Activated naive CD8-positive, alpha-beta T cell treated with anti-CD3 and anti-CD28 coated beads, Interleukin-2, amount 10 ng/mL, durations not matched to agents 7 days and 5 days (primary cell): ENCODE measurements at regions of chr2 and their contacts with region 1.

Region 1: GRCh38 chr2:191013932-191014652 is at the start of gene STAT1:
- DNase-seq: peak; percentile 100
- ATAC-seq: peak; percentile 87
- H3K4me3 Mint-ChIP-seq: no peak within 1 kb of the TSS
- H3K27ac Mint-ChIP-seq: no peak within 1 kb of the TSS
- H3K4me1 Mint-ChIP-seq: peaks cover 35% of the 10 kb centered on the region
- H3K27me3 Mint-ChIP-seq: no peaks in the 10 kb centered on the region
- total RNA-seq, gene STAT1: 544 to 571 TPM

Region 2: GRCh38 chr2:190880378-190881073 is 133.6 kb before region 1 on chr2 and contains the start of gene GLS:
- POLR2A ChIA-PET with region 1: interaction called, 37 read pairs
- DNase-seq: peak; percentile 94
- ATAC-seq: peak; percentile 80
- H3K4me3 Mint-ChIP-seq: peak within 1 kb of the TSS; percentile 100
- H3K27ac Mint-ChIP-seq: peak within 1 kb of the TSS; percentile 100
- H3K4me1 Mint-ChIP-seq: peaks cover 39% of the 10 kb centered on the region
- H3K27me3 Mint-ChIP-seq: no peaks in the 10 kb centered on the region
- total RNA-seq, gene GLS: 175 to 187 TPM

Region 3: GRCh38 chr2:190911813-190912212 is 102.3 kb before region 1 on chr2:
- POLR2A ChIA-PET with region 1: no interaction called
- DNase-seq: no peak
- ATAC-seq: peak; percentile 16
- H3K4me3 Mint-ChIP-seq: no peak overlapping the region
- H3K27ac Mint-ChIP-seq: no peak overlapping the region
- H3K4me1 Mint-ChIP-seq: peaks cover 23% of the 10 kb centered on the region
- H3K27me3 Mint-ChIP-seq: no peaks in the 10 kb centered on the region

Region 4: DNA sequence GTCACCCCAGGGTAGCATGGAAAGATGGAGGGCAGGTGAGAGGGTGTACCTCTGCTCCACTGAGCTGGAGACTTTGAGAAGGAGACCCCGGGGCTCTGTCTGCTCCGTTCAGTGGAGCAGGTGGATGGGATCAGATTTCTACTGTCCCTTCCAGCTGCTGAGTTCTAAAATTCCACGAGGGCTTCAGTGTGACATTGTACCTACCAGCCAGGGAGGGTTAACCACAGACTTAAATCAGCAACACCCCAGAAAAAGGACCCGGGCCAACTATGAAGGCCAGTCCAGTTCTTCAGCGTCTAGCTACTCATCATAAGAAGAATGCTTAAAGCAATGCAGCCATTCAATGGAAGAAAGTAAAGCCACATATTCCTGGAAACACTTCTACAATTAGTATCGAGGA is 24.0 kb before region 1 on chr2:
- POLR2A ChIA-PET with region 1: interaction called, 12 read pairs
- DNase-seq: no peak
- ATAC-seq: no peak
- H3K4me3 Mint-ChIP-seq: no peak overlapping the region
- H3K27ac Mint-ChIP-seq: peak overlapping the region; percentile 58
- H3K4me1 Mint-ChIP-seq: peaks cover 56% of the 10 kb centered on the region
- H3K27me3 Mint-ChIP-seq: no peaks in the 10 kb centered on the region

Region 5: DNA sequence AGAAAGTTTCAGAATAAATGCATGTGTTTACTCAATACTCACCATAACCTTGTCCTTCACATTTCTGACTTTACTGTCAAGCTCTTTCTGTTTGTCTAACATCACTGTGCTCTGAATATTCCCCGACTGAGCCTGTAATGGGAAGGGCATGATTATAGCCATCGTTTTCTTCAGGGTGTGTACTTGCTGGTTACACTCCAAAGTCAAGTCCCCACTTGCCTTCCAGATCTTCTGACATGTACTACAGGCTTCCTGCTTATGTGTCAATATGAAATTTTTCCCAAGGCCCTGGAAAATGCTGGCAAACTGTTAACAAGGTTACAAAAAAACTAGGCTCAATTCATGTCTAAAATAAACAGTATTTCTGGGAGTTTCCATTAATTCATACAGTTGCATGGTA is 13.1 kb before region 1 on chr2:
- POLR2A ChIA-PET with region 1: interaction called, 49 read pairs
- DNase-seq: no peak
- ATAC-seq: no peak
- H3K4me3 Mint-ChIP-seq: peak overlapping the region; percentile 4
- H3K27ac Mint-ChIP-seq: peak overlapping the region; percentile 68
- H3K4me1 Mint-ChIP-seq: peaks cover 72% of the 10 kb centered on the region
- H3K27me3 Mint-ChIP-seq: no peaks in the 10 kb centered on the region

Region 6: GRCh38 chr2:191029280-191029950 is 15.3 kb after region 1 on chr2:
- POLR2A ChIA-PET with region 1: interaction called, 125 read pairs
- DNase-seq: no peak
- ATAC-seq: no peak
- H3K4me3 Mint-ChIP-seq: peak overlapping the region; percentile 11
- H3K27ac Mint-ChIP-seq: peak overlapping the region; percentile 72
- H3K4me1 Mint-ChIP-seq: peaks cover 52% of the 10 kb centered on the region
- H3K27me3 Mint-ChIP-seq: no peaks in the 10 kb centered on the region

Region 7: GRCh38 chr2:191045141-191045540 is 31.0 kb after region 1 on chr2:
- POLR2A ChIA-PET with region 1: no interaction called
- DNase-seq: no peak
- ATAC-seq: no peak
- H3K4me3 Mint-ChIP-seq: no peak overlapping the region
- H3K27ac Mint-ChIP-seq: no peak overlapping the region
- H3K4me1 Mint-ChIP-seq: peaks cover 9% of the 10 kb centered on the region
- H3K27me3 Mint-ChIP-seq: no peaks in the 10 kb centered on the region

Region 8: DNA sequence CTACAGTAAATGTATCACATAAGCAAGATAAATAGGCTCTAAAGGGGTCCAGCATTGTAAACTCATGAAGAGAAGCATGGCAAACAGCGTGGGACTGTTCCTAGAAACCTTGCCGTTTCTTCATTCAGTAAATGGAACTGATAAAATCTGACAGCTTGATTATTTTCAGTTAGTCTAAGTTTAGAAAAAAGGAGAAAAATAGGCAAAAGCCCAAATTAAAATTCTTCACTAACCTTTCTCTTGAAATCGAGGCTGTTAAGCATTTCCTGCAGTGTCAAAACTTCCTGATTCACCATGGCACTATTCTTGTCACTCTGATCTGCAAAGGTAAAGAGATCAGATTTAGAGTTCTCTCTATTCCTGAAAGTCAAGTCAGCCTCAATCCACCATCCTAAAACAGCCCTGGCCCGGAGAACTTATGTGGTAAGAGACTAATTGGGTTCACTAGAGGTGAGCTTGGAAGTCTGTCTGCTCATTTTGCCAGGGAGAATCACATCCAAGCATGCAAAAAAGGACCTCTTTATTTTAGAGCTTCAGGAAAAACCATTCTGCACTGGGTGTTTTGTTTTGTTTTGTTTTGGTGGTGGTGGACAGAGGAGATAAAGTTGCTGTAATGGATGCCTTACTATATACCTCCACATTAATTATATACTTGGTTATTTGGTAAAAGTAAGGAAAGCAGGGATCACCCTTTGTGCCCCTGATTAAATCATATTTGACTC is 52.3 kb after region 1 on chr2:
- POLR2A ChIA-PET with region 1: interaction called, 59 read pairs
- DNase-seq: no peak
- ATAC-seq: peak; percentile 27
- H3K4me3 Mint-ChIP-seq: peak overlapping the region; percentile 88
- H3K27ac Mint-ChIP-seq: peak overlapping the region; percentile 92
- H3K4me1 Mint-ChIP-seq: peaks cover 64% of the 10 kb centered on the region
- H3K27me3 Mint-ChIP-seq: no peaks in the 10 kb centered on the region